ENCODE measurements at regions of chr10 and their contacts with region 1.

Region 1: GRCh38 chr10:104350127-104350635 is 3.5 kb upstream of the CFAP58 start:
- DNase-seq: no peak
- H3K4me3 ChIP-seq: peak overlapping the region in 6 of 8 donors; percentile 8 to 69 (median 18)
- H3K27ac ChIP-seq: peak overlapping the region; percentile 39 to 90 (median 86)
- H3K4me1 ChIP-seq: peaks cover 9 to 82% (median 60%) of the 10 kb centered on the region in 6 donors
- H3K27me3 ChIP-seq: peaks cover 0 to 1% (median 0%) of the 10 kb centered on the region in 7 donors
- CTCF ChIP-seq: peak; percentile 43 to 83 (median 76)
- POLR2A ChIP-seq: no peak

Region 2: GRCh38 chr10:104104926-104105325 is 245.3 kb before region 1 on chr10:
- intact Hi-C with region 1: no loop called
- DNase-seq: no peak
- H3K4me3 ChIP-seq: no peak overlapping the region
- H3K27ac ChIP-seq: no peak overlapping the region
- H3K4me1 ChIP-seq: no peaks in the 10 kb centered on the region
- H3K27me3 ChIP-seq: no peaks in the 10 kb centered on the region
- CTCF ChIP-seq: no peak
- POLR2A ChIP-seq: no peak

Region 3: GRCh38 chr10:104304962-104305361 is 45.2 kb before region 1 on chr10:
- intact Hi-C with region 1: loop called (anchors 2 kb)
- DNase-seq: no peak
- H3K4me3 ChIP-seq: no peak overlapping the region
- H3K27ac ChIP-seq: peak overlapping the region in 3 of 8 donors; percentile 15 to 51 (median 47)
- H3K4me1 ChIP-seq: peaks cover 10 to 88% (median 46%) of the 10 kb centered on the region in 6 donors
- H3K27me3 ChIP-seq: peaks cover 0 to 6% (median 0%) of the 10 kb centered on the region in 7 donors
- CTCF ChIP-seq: no peak
- POLR2A ChIP-seq: no peak

Measured in spleen (tissue), 13 donors.